Panc1 (cell line): ENCODE measurements at regions of chr1 and their contacts with region 1.

Region 1: GRCh38 chr1:205750138-205751035 is at the start of gene NUCKS1:
- DNase-seq: peak; percentile 82
- ATAC-seq: peak; percentile 90
- H3K4me3 ChIP-seq: peak within 1 kb of the TSS; percentile 88 to 98
- H3K27ac ChIP-seq: peak within 1 kb of the TSS; percentile 98
- H3K4me1 ChIP-seq: peaks cover 22% of the 10 kb centered on the region
- H3K27me3 ChIP-seq: no peaks in the 10 kb centered on the region
- CTCF ChIP-seq: no peak
- total RNA-seq, gene NUCKS1: 210 TPM

Region 2: GRCh38 chr1:206856674-206857464 is 1106.5 kb after region 1 on chr1:
- CTCF ChIA-PET with region 1: no interaction called
- POLR2A ChIA-PET with region 1: no interaction called
- in situ Hi-C with region 1: no loop called
- intact Hi-C with region 1: loop called (anchors 10 kb)
- DNase-seq: no peak
- ATAC-seq: peak; percentile 76
- H3K4me3 ChIP-seq: no peak overlapping the region
- H3K27ac ChIP-seq: no peak overlapping the region
- H3K4me1 ChIP-seq: no peaks in the 10 kb centered on the region
- H3K27me3 ChIP-seq: peaks cover 5% of the 10 kb centered on the region
- CTCF ChIP-seq: peak; percentile 38